ENCODE measurements at regions of chrX and their contacts with region 1.

Region 1: DNA sequence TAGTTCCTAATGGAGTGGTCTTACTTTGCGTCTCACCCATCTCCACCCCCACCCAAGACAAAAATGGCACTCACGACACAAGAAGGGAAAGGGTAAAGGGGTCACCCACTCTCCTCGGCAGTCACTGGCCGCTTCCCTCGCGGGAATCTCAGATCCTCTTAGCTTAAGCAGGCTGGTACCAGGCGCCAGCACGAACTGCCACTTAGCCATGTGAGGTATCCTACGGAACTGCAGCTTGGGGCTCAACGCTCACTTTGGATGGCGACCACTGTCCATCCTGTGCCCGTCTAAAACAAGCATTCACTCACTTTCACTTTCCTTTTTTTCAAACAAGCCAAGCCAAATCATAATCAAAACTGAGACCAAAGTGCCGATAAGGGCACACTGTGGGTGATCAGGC is 14.6 kb upstream of the MAGIX start:
- DNase-seq: no peak
- ATAC-seq: no peak
- H3K4me3 ChIP-seq: no peak overlapping the region
- H3K27ac ChIP-seq: no peak overlapping the region
- H3K4me1 ChIP-seq: no peaks in the 10 kb centered on the region
- H3K27me3 ChIP-seq: no peaks in the 10 kb centered on the region
- CTCF ChIP-seq: no peak
- POLR2A ChIP-seq: no peak

Region 2: DNA sequence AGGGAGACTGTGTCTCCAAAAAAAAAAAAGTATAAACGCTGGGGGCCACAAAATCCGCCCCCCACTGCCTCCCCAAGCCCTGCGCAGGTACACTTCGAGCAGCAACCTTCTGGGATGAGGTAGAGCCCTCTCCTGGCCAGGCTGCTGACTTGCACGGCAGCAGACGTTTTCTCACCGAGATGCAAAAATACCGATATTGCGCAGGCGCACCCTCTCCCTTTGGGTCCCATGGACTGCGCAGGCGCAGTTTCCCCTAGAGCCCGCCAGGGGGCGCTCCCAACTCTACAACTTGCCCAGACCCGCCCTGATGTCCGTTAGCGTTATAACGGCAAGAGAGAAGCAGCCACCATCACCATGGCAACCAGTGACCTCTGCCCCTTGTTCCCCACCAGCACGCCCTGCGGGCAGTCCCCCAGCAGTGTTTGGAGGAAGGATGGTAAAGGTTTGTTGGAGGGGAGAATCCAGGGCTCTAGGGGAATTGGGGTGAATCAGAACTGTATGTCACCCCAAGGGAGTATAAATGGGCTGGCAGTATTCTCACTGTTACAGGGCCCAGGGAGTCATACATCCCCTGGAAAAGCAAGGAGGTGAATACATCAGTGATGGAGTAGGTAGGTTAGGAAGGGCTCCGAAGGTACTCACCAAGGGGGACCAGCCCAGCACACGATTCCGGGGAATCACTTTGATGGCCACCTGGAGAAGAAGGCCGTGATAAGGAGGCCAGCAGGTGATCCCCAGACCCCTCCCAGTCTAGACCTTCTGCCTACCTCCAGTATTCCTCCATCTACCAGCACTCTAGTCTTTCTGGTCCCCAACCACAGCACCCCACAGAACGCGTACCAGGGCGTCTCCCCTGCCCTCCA is 230.6 kb before region 1 on chrX:
- in situ Hi-C with region 1: no loop called
- intact Hi-C with region 1: no loop called
- DNase-seq: peak; percentile 75 to 89
- ATAC-seq: peak; percentile 79
- H3K4me3 ChIP-seq: peak overlapping the region in 1 of 4 donors; percentile 68
- H3K27ac ChIP-seq: peak overlapping the region; percentile 31 to 89 (median 67)
- H3K4me1 ChIP-seq: peaks cover 0 to 4% of the 10 kb centered on the region in 2 donors
- H3K27me3 ChIP-seq: no peaks in the 10 kb centered on the region
- CTCF ChIP-seq: peak; percentile 90 to 94 (median 91)
- POLR2A ChIP-seq: no peak

Region 3: DNA sequence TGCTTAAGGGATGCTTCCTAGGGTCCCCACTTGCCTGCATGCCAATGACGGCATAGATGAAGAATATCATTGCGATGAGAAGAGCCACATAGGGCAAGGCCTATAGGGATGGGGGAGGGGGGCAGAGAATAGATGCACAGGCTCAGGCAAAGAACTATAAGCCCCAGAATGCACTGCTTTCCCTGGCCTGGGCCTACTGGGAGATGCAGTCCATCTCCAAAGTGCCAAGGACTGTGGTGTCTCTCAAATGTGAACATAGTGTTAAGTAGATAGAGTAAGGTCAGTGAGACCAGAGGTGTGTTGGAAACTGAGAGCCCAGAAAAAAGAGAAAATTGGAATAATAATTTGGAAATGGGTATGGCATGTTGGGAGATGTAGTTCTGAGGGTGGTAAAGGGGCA is 64.3 kb after region 1 on chrX:
- in situ Hi-C with region 1: no loop called
- intact Hi-C with region 1: loop called (anchors 2 kb)
- DNase-seq: no peak
- ATAC-seq: no peak
- H3K4me3 ChIP-seq: no peak overlapping the region
- H3K27ac ChIP-seq: no peak overlapping the region
- H3K4me1 ChIP-seq: no peaks in the 10 kb centered on the region
- H3K27me3 ChIP-seq: no peaks in the 10 kb centered on the region
- CTCF ChIP-seq: no peak
- POLR2A ChIP-seq: no peak